ENCODE measurements at regions of chrX and their contacts with region 1.

Region 1: DNA sequence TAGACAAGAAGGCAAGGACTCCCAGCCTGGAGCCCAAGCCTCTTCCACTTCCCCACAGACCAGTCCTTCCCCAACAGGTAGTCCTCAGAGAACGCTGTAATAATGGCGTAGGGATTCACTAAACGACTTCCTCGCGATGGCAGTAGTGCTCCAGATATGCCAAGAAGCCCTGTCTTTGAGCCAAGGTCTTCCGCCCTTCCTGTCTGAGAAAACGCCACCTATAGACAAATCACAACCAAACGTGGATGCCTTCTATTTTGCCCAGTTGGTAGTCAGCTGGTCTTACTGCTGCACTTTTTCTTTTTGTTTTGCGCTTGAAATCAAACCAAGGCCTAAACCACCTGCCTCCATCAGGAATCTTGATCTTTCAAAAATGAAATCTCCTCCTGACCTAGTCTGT is 203.3 kb downstream of the OR13H1 start:
- DNase-seq: peak; percentile 59 to 71
- ATAC-seq: peak; percentile 89 to 92 (median 91)
- H3K4me3 ChIP-seq: peak overlapping the region; percentile 72
- H3K27ac ChIP-seq: peak overlapping the region; percentile 86
- H3K4me1 ChIP-seq: no peaks in the 10 kb centered on the region
- H3K27me3 ChIP-seq: no peaks in the 10 kb centered on the region
- CTCF ChIP-seq: peak; percentile 44

Region 2: GRCh38 chrX:131710431-131711045 is 36.6 kb before region 1 on chrX:
- intact Hi-C with region 1: loop called in 1 of 2 experiments (anchors 1 kb)
- DNase-seq: no peak
- ATAC-seq: peak; percentile 19 to 40 (median 24)
- H3K4me3 ChIP-seq: peak overlapping the region; percentile 66
- H3K27ac ChIP-seq: no peak overlapping the region
- H3K4me1 ChIP-seq: no peaks in the 10 kb centered on the region
- H3K27me3 ChIP-seq: no peaks in the 10 kb centered on the region
- CTCF ChIP-seq: no peak

Region 3: GRCh38 chrX:131725001-131725654 is 22.0 kb before region 1 on chrX:
- intact Hi-C with region 1: no loop called
- DNase-seq: no peak
- ATAC-seq: no peak
- H3K4me3 ChIP-seq: no peak overlapping the region
- H3K27ac ChIP-seq: no peak overlapping the region
- H3K4me1 ChIP-seq: no peaks in the 10 kb centered on the region
- H3K27me3 ChIP-seq: no peaks in the 10 kb centered on the region
- CTCF ChIP-seq: no peak